ENCODE measurements at regions of chr4 and their contacts with region 1.

Region 1: DNA sequence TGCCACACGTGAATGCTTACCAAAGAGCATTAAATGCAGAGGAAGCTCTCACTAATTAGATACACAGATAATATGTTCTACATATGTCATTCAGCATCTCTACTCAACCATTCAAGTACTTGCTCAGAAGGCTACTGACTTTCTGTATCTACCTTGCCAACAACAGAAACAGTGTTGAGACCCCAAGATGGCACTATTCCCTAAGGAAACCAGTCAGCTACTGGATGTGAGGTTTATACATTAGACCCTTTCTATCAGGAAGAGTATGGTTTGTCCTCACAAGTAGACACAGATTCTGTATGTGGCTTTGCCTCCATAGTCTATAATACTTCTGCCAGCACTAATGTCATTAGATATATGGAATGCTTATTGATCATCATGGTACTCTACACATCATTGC is 443.9 kb upstream of the INTU start:
- DNase-seq: peak in 2 of 7 donors; percentile 27 to 37
- H3K4me3 ChIP-seq: no peak overlapping the region
- H3K27ac ChIP-seq: no peak overlapping the region
- H3K4me1 ChIP-seq: no peaks in the 10 kb centered on the region
- H3K27me3 ChIP-seq: no peaks in the 10 kb centered on the region
- CTCF ChIP-seq: peak in 4 of 6 experiments; percentile 15 to 55 (median 49)
- POLR2A ChIP-seq: no peak

Region 2: DNA sequence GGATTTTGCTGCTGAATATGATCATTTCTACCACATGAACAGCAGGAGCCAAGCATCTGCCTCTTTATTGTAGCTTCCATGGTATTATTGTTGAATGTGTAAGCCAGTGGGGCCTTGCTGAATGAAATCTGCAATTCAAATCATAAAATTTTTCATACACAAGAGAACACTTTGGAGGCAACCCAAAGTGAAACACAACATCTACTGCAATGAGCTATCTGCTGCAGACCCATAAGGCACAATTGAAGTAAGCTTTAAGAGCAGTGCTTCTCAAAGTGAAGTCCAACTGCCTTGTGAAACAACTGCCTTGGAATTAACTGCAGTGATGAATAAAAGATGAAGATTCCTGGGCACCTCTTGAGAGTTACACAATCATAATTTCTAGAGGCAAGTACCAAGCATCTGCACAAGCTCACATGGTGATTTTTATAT is 182.4 kb before region 1 on chr4:
- intact Hi-C with region 1: no loop called
- DNase-seq: no peak
- H3K4me3 ChIP-seq: no peak overlapping the region
- H3K27ac ChIP-seq: no peak overlapping the region
- H3K4me1 ChIP-seq: no peaks in the 10 kb centered on the region
- H3K27me3 ChIP-seq: no peaks in the 10 kb centered on the region
- CTCF ChIP-seq: no peak
- POLR2A ChIP-seq: no peak

Region 3: DNA sequence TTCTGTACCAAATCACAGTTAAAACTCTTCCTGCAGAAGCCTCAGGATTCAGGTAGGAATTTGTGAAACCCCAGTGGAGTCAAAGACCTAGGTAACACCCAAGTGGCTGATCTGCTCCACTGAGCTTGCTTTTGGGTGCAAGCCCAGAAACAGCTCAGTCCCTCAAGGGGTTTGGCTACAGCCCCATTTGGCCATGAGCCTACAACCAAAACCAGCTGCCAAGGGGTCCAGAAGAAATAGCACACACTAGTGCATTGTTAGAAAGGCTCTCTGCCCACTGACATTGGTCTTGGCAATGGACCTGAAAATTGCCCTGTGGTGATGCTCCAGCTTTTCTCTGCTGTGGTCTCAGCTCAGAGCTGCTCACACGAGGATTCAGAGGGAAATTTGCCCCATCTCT is 133.5 kb before region 1 on chr4:
- intact Hi-C with region 1: no loop called
- DNase-seq: no peak
- H3K4me3 ChIP-seq: no peak overlapping the region
- H3K27ac ChIP-seq: no peak overlapping the region
- H3K4me1 ChIP-seq: no peaks in the 10 kb centered on the region
- H3K27me3 ChIP-seq: no peaks in the 10 kb centered on the region
- CTCF ChIP-seq: no peak
- POLR2A ChIP-seq: no peak

Region 4: DNA sequence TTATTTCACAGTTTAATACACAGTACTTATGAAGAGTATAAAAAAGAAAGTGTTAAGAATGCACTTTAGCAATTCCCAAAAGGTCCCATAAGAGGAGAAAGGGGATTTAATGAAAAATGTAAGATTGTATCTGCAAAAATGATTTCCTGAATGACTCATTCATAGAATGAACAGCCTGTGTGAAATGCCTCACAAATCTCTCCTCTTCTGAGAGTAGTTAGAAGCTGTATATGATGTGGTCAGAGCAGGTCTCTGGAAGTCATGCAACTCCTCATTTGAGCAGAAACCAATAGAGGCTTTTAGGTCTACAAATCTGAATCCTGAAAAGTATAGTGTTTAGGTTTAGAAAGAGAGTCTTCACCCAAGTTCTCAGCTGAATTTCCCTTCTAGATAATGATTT is 62.6 kb after region 1 on chr4:
- intact Hi-C with region 1: no loop called
- DNase-seq: no peak
- H3K4me3 ChIP-seq: no peak overlapping the region
- H3K27ac ChIP-seq: no peak overlapping the region
- H3K4me1 ChIP-seq: no peaks in the 10 kb centered on the region
- H3K27me3 ChIP-seq: no peaks in the 10 kb centered on the region
- CTCF ChIP-seq: no peak
- POLR2A ChIP-seq: no peak

Region 5: DNA sequence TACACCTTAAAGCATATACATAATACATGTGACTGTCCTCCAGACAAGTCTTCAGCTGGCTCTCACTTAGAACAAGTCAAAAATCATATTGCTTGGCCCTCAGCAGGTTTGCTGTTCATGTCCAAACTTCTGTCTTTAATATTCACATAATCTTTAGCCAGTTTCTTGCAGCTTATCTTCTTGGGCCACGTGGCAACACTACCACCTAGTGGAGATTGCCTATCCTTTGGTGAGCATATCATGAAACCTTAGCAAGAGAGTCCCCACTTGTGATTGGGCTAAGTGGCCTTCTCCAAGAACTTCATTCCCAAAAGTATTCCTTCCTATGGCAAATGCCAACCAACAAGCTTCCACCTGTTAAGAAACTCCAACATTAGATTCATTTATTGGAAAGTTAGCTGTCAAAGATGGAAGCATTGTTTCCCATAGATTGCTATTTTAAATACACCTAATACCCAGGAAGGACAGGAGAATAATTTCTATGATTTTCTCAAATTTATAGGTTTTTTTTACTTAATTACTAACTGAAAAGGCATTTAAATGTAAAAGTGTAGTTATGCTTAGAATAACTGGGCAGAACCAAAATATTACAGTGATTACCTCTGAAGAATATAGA is 212.0 kb after region 1 on chr4:
- intact Hi-C with region 1: loop called in 1 of 2 experiments (anchors 5 kb)
- DNase-seq: peak; percentile 60 to 88 (median 73)
- H3K4me3 ChIP-seq: no peak overlapping the region
- H3K27ac ChIP-seq: no peak overlapping the region
- H3K4me1 ChIP-seq: no peaks in the 10 kb centered on the region
- H3K27me3 ChIP-seq: no peaks in the 10 kb centered on the region
- CTCF ChIP-seq: peak; percentile 64 to 85 (median 76)
- POLR2A ChIP-seq: no peak

Measured in adrenal gland (tissue), 19 donors.